ENCODE measurements at regions of chr10 and their contacts with region 1.

Region 1: DNA sequence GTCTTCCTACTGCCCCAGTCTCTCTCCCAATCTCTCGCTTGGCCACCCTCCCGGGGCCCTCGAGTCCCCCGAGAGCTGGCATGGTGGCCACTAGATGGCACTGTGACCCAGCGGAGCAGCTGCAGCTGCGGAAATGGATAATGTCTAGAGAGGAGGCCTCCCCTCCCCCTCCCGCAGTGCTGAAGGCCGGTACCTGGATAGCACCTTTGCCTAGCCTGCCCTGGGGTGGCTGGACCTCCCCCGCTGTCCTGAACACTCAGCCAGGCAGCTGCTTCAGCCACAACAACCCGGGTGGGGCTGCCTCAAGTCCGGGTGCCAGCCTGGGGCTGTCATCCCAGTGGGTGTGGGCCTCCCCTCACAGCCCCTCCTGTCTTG is 65.2 kb downstream of the GOLGA7B start:
- DNase-seq: peak; percentile 85
- CTCF ChIP-seq: peak; percentile 89

Region 2: GRCh38 chr10:97163781-97164501 is 750.9 kb before region 1 on chr10:
- CTCF ChIA-PET with region 1: no interaction called
- POLR2A ChIA-PET with region 1: no interaction called
- DNase-seq: no peak
- CTCF ChIP-seq: no peak

Region 3: GRCh38 chr10:97903128-97904017 is 11.5 kb before region 1 on chr10:
- CTCF ChIA-PET with region 1: interaction called, 46 read pairs
- POLR2A ChIA-PET with region 1: no interaction called
- DNase-seq: no peak
- CTCF ChIP-seq: no peak

Region 4: GRCh38 chr10:97927622-97928021 is 12.8 kb after region 1 on chr10:
- CTCF ChIA-PET with region 1: interaction called, 11 read pairs
- POLR2A ChIA-PET with region 1: no interaction called
- DNase-seq: no peak
- CTCF ChIP-seq: no peak

Region 5: GRCh38 chr10:98038288-98038687 is 123.5 kb after region 1 on chr10:
- CTCF ChIA-PET with region 1: interaction called, 193 read pairs
- POLR2A ChIA-PET with region 1: no interaction called
- DNase-seq: no peak
- CTCF ChIP-seq: no peak